ENCODE measurements at regions of chr9 and their contacts with region 1.

Region 1: GRCh38 chr9:128304149-128304974 is 17.9 kb downstream of the TRUB2 start:
- DNase-seq: no peak
- H3K4me3 ChIP-seq: no peak overlapping the region
- H3K27ac ChIP-seq: no peak overlapping the region
- H3K4me1 ChIP-seq: no peaks in the 10 kb centered on the region
- H3K27me3 ChIP-seq: no peaks in the 10 kb centered on the region
- CTCF ChIP-seq: no peak
- EP300 ChIP-seq: no peak
- POLR2A ChIP-seq: no peak
- RAD21 ChIP-seq: no peak

Region 2: DNA sequence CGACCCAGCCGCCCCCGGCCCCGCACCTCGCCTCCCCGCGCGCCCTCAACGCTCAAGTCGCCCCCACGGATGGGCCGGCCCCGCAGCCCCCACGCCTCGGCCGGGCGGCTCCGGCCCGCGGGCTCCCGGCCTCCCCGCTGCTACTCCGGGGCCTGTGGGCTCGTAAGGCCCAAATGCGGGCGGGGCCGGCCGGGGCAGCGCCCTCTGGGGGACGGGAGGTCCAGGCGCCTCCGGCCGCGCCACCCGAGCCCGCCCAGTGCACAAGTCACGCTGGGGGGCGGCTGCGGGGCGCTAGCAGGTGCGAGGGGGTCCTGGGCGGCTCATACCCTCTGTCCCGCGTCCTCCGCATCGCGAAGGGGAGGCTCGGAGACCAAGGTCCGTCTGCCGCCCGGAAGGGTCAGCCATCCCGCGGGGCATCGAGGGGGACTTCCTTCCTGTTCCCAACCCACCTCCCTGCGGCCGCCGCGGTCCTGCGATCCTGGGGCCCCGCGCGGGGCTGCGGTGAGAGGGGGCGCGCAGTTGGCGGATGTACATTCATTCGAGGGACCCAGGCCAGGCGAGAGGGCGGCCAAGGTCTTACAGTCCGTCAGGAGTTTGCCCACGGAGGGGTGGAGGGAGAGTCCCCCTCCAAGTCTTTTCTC is 112.8 kb before region 1 on chr9 and contains the start of gene CIZ1:
- CTCF ChIA-PET with region 1: no interaction called
- POLR2A ChIA-PET with region 1: no interaction called
- DNase-seq: peak in 1 of 2 experiments; percentile 84
- H3K4me3 ChIP-seq: peak within 1 kb of the TSS; percentile 64 to 99 (median 77)
- H3K27ac ChIP-seq: no peak within 1 kb of the TSS; the same call in 1 of the 2 replicates
- H3K4me1 ChIP-seq: peaks cover 0 to 11% (median 4%) of the 10 kb centered on the region in 4 experiments; a peak in 4 of 7 replicates
- H3K27me3 ChIP-seq: no peaks in the 10 kb centered on the region
- CTCF ChIP-seq: peak; percentile 79 to 86 (median 80)
- EP300 ChIP-seq: no peak
- POLR2A ChIP-seq: peak in 1 of 2 experiments; percentile 44; a peak in 1 of 3 replicates
- RAD21 ChIP-seq: peak in 1 of 2 experiments; percentile 15; a peak in 1 of 4 replicates
- total RNA-seq, gene CIZ1: 103 and 107 TPM in 2 replicates

Region 3: DNA sequence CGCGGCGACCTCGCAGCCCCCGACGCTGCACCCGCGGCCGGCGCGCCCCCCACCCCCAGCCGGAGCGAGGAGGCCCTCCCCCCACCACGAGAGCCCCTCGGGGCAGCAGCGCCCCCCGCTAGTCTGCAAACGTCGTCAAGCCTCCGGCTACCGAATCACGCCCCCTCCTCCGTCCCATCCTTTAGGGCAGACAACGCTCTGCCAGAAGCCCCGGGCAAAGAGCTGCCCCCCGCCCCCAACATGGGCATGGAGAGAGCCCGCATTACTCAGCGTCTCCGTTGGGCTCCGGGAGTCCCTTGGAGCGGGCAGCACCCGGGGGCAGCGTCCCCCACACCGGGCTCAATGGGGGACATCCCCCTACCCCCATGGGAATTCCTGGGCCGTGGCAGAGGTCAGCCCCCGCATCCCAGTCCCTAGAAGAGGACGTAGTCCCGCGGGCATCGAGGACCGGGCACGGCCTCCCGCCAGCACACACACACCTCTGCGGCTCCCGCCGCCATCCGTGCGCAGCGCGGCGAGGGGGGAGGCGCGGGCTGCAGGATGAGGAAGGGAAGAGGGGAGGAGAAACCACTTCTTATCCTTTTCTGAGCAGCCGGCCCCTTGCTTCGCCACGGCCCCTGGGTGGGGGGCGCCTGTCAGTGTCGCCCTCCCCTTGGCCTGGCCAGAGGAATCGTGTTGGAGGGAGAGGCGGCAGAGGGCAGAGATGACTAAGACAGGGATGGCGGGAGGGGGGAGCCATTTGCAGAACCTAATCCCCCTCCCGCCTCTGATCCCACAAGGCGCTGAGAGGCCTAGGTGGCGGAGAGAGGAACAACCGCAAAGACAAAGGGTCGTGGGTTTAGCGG is 100.4 kb before region 1 on chr9:
- CTCF ChIA-PET with region 1: no interaction called
- POLR2A ChIA-PET with region 1: no interaction called
- DNase-seq: peak in 1 of 2 experiments; percentile 81
- H3K4me3 ChIP-seq: peak overlapping the region; percentile 55 to 93 (median 74)
- H3K27ac ChIP-seq: no peak overlapping the region; the same call in 1 of the 2 replicates
- H3K4me1 ChIP-seq: peaks cover 3 to 11% (median 9%) of the 10 kb centered on the region in 4 experiments; a peak in 6 of 7 replicates
- H3K27me3 ChIP-seq: no peaks in the 10 kb centered on the region
- CTCF ChIP-seq: peak in 1 of 3 experiments; percentile 3; a peak in 1 of 4 replicates
- EP300 ChIP-seq: no peak
- POLR2A ChIP-seq: no peak; a peak in 1 of 3 replicates
- RAD21 ChIP-seq: no peak

Region 4: DNA sequence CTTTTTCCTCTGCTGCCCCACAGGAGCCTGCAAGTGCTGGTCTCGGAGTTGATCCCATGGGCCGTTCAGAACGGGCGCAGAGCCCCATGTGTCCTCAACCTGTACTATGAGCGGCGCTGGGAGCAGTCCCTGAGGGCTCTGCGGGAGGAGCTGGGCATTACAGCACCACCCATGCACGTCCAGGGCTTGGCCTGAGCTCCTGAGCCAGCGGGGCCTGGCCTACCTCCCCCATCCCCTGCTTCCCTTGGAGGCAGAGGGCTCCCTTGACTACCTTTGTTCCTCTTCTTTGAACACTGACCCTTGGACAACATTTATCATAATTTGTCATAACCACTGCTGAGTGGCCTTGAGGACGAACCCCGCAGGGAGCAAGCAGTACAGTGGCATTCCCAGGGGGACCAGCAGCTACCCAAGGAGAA is 29.1 kb after region 1 on chr9:
- CTCF ChIA-PET with region 1: interaction called, 3 read pairs
- POLR2A ChIA-PET with region 1: interaction called, 13 read pairs
- DNase-seq: no peak
- H3K4me3 ChIP-seq: no peak overlapping the region
- H3K27ac ChIP-seq: no peak overlapping the region
- H3K4me1 ChIP-seq: no peaks in the 10 kb centered on the region
- H3K27me3 ChIP-seq: no peaks in the 10 kb centered on the region; a peak in 1 of 7 replicates
- CTCF ChIP-seq: no peak
- EP300 ChIP-seq: no peak
- POLR2A ChIP-seq: no peak
- RAD21 ChIP-seq: no peak

Region 5: DNA sequence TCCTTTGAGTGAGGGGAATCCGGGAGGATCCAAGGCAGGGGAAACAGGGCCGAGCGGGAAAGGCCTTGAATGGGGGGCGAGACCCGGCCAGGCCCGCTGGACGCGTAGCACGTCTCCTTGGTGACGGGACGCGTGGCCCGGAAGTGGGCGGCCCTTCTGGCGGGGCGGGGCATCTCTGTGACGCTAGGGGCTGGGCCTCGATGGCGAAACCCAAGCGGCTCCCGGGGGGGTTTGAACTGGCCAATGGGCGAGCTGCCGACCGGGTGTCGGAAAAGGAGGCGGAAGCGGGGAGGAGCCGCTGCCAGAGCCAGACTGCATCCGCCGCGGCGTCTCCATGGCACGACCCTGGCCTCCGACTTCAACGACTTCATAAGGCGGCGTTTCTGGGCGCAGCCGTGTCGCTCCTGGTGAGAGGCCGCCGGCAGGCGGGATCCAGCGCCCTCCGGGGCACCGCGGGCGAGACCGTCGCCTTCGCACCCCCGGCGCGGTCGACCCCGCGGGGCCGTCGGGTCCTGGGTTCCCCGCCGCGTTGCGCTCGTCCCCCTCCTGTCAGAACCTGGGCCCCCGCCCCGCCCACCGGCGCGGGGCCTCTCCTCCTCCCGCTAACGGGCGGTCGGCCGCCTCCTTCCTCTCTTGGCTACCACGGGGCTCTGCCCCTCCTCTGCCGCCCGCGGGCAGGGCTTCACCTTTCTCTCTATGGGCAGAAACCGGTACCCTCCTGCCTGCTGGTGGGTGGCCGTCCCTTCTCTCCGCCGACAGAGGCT is 151.7 kb after region 1 on chr9 and contains the start of gene ODF2:
- CTCF ChIA-PET with region 1: no interaction called
- POLR2A ChIA-PET with region 1: no interaction called
- DNase-seq: peak; percentile 82 to 99
- H3K4me3 ChIP-seq: peak within 1 kb of the TSS; percentile 57 to 74 (median 70)
- H3K27ac ChIP-seq: no peak within 1 kb of the TSS
- H3K4me1 ChIP-seq: peaks cover 0 to 8% (median 5%) of the 10 kb centered on the region in 4 experiments; a peak in 5 of 7 replicates
- H3K27me3 ChIP-seq: peaks cover 18 to 50% (median 43%) of the 10 kb centered on the region in 4 experiments
- CTCF ChIP-seq: no peak
- EP300 ChIP-seq: no peak
- POLR2A ChIP-seq: peak in 1 of 2 experiments; percentile 57; a peak in 1 of 3 replicates
- RAD21 ChIP-seq: no peak
- total RNA-seq, gene ODF2: 17.9 and 19.9 TPM in 2 replicates

Measured in H1 (cell line).